ENCODE measurements at regions of chr1 and their contacts with region 1.

Region 1: GRCh38 chr1:218946147-218946546 is 227.5 kb upstream of the LYPLAL1 start:
- DNase-seq: no peak
- ATAC-seq: no peak; the same call in 2 of the 3 replicates
- H3K4me3 ChIP-seq: no peak overlapping the region
- H3K27ac ChIP-seq: no peak overlapping the region
- H3K4me1 ChIP-seq: no peaks in the 10 kb centered on the region
- H3K27me3 ChIP-seq: no peaks in the 10 kb centered on the region
- CTCF ChIP-seq: no peak
- EP300 ChIP-seq: no peak
- POLR2A ChIP-seq: no peak
- RAD21 ChIP-seq: no peak

Region 2: GRCh38 chr1:218705911-218706893 is 239.9 kb before region 1 on chr1:
- CTCF ChIA-PET with region 1: no interaction called
- POLR2A ChIA-PET with region 1: no interaction called
- RAD21 ChIA-PET with region 1: no interaction called
- SMC1A ChIA-PET with region 1: no interaction called
- in situ Hi-C with region 1: no loop called
- intact Hi-C with region 1: no loop called
- DNase-seq: no peak
- ATAC-seq: no peak
- H3K4me3 ChIP-seq: no peak overlapping the region
- H3K27ac ChIP-seq: no peak overlapping the region
- H3K4me1 ChIP-seq: no peaks in the 10 kb centered on the region
- H3K27me3 ChIP-seq: no peaks in the 10 kb centered on the region
- CTCF ChIP-seq: no peak
- EP300 ChIP-seq: no peak
- POLR2A ChIP-seq: no peak
- RAD21 ChIP-seq: no peak

Region 3: DNA sequence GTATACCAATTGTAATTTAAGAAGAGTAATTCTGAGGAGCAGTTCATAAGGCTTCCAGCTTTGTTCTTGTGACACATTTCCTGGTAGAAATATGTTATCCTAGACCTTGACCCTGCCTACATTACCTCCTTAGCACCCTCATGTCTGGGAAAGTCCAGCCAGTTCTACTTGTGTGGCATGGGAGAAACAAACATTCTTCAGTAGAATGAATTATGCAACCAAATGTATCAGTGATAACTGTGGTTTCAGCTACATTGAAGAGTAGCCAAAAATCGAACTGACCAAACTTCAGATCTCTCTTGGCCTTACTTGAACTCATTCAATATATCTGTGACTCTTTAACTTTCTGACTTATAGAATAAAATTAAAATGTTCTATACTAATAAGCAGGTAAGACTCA is 80.6 kb before region 1 on chr1:
- CTCF ChIA-PET with region 1: no interaction called
- POLR2A ChIA-PET with region 1: no interaction called
- RAD21 ChIA-PET with region 1: no interaction called
- SMC1A ChIA-PET with region 1: no interaction called
- in situ Hi-C with region 1: no loop called
- intact Hi-C with region 1: no loop called
- DNase-seq: no peak
- ATAC-seq: no peak
- H3K4me3 ChIP-seq: no peak overlapping the region
- H3K27ac ChIP-seq: no peak overlapping the region
- H3K4me1 ChIP-seq: no peaks in the 10 kb centered on the region
- H3K27me3 ChIP-seq: no peaks in the 10 kb centered on the region
- CTCF ChIP-seq: no peak
- EP300 ChIP-seq: no peak
- POLR2A ChIP-seq: no peak
- RAD21 ChIP-seq: no peak

Region 4: GRCh38 chr1:218930472-218931241 is 15.5 kb before region 1 on chr1:
- CTCF ChIA-PET with region 1: no interaction called
- POLR2A ChIA-PET with region 1: no interaction called
- RAD21 ChIA-PET with region 1: no interaction called
- SMC1A ChIA-PET with region 1: no interaction called
- in situ Hi-C with region 1: no loop called
- intact Hi-C with region 1: no loop called
- DNase-seq: no peak
- ATAC-seq: no peak
- H3K4me3 ChIP-seq: no peak overlapping the region
- H3K27ac ChIP-seq: no peak overlapping the region
- H3K4me1 ChIP-seq: no peaks in the 10 kb centered on the region
- H3K27me3 ChIP-seq: no peaks in the 10 kb centered on the region
- CTCF ChIP-seq: no peak
- EP300 ChIP-seq: no peak
- POLR2A ChIP-seq: no peak
- RAD21 ChIP-seq: no peak

Region 5: GRCh38 chr1:218967836-218968235 is 21.7 kb after region 1 on chr1:
- CTCF ChIA-PET with region 1: no interaction called
- POLR2A ChIA-PET with region 1: no interaction called
- RAD21 ChIA-PET with region 1: no interaction called
- SMC1A ChIA-PET with region 1: no interaction called
- in situ Hi-C with region 1: no loop called
- intact Hi-C with region 1: loop called (anchors 2 kb)
- DNase-seq: no peak
- ATAC-seq: no peak
- H3K4me3 ChIP-seq: no peak overlapping the region
- H3K27ac ChIP-seq: no peak overlapping the region
- H3K4me1 ChIP-seq: no peaks in the 10 kb centered on the region
- H3K27me3 ChIP-seq: no peaks in the 10 kb centered on the region; a peak in 1 of 4 replicates
- CTCF ChIP-seq: no peak
- EP300 ChIP-seq: no peak
- POLR2A ChIP-seq: no peak
- RAD21 ChIP-seq: no peak

Region 6: GRCh38 chr1:219514731-219515130 is 568.6 kb after region 1 on chr1:
- CTCF ChIA-PET with region 1: no interaction called
- POLR2A ChIA-PET with region 1: no interaction called
- RAD21 ChIA-PET with region 1: no interaction called
- SMC1A ChIA-PET with region 1: no interaction called
- in situ Hi-C with region 1: no loop called
- intact Hi-C with region 1: no loop called
- DNase-seq: no peak
- ATAC-seq: peak; percentile 70
- H3K4me3 ChIP-seq: no peak overlapping the region
- H3K27ac ChIP-seq: no peak overlapping the region
- H3K4me1 ChIP-seq: no peaks in the 10 kb centered on the region
- H3K27me3 ChIP-seq: no peaks in the 10 kb centered on the region
- CTCF ChIP-seq: no peak
- EP300 ChIP-seq: no peak
- POLR2A ChIP-seq: no peak
- RAD21 ChIP-seq: no peak